GM18951 (cell line): ENCODE measurements at regions of chr21 and their contacts with region 1.

Region 1: DNA sequence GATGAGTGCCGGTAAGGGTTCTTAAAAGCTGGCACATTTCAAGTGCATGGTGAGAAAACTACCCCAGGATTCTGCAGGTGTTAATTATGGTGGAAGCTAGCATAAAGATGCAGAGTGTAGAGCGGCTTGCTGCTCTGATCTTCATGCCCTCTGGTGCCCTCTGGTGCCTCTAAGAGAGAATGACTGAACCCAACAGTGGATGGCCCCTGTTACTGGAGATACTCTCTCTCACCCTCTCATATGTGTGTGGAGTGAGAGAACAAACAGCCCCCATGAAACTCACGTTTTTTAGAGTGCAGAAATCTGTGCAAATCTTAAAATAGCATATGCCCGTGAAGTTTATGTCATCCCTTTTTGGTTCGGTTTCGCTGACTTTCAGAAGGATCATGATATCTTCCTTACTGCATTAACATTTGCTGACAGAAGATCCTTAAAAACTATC is 90.0 kb downstream of the GRIK1 start:
- POLR2A ChIP-seq: no peak

Region 2: DNA sequence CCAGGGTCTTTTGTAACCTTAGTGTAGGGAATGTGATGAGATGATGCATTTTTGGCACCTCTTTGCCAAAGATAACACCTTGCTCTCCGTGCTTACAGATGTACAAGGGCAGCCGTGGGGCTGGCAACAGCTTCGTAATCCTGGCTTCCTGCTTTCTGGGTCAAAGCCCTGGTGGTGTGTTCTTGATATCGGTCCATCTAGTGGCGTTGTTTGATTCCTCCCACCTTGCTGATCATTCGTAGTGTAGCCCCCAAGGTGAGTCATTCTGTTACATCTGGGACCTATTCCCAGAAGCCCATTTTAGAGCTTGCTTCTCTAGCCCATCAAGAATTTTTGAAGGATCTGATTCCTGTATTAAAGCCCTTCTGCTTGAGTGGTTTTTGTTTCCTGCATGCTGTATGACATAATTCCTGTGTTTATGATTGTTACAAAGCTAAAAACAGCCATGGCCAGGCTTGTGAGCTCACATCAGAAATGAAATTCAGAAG is 769.3 kb before region 1 on chr21:
- in situ Hi-C with region 1: loop called (anchors 10 kb)
- POLR2A ChIP-seq: no peak

Region 3: DNA sequence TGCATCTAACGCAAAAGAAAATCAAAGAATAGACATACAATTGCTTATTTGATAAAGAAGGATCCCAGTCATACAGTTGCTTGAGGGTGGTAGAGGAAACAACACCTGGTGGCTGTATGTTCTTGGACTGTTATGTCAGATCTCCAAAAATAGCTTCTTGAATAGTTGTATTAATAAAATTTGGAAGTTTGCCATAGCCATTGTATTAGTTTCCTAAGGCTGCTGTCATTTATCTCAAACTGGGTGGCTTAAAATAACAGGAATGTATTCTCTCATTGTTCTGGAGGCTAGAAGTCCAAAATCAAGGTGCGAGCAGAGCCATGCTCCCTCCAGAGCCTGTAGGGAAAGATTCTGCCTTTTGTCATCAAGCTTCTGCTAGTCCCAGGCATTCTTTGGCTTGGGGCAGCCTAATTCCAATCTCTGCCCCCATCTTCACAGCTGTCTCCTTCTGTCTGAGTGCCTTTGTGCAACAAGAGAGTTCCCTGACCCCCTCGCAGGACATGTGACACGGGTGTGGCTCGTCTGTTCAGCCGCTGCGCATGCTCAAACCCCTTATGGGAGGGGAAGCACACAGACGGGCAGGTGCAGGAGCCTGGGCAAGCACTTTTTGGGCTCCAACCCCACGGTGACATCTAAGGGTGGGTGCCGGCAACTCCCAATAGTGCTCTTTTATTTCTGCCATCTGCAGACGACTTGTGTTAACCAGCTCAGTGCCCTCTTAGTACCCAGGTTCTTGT is 111.7 kb after region 1 on chr21:
- in situ Hi-C with region 1: no loop called
- POLR2A ChIP-seq: no peak